WTC11 (cell line): ENCODE measurements at regions of chr11 and their contacts with region 1.

Region 1: GRCh38 chr11:120108154-120108865 is 29.6 kb downstream of the TRIM29 start:
- DNase-seq: peak; percentile 86
- ATAC-seq: peak; percentile 91
- H3K4me3 Mint-ChIP-seq: no peak overlapping the region
- H3K27ac Mint-ChIP-seq: no peak overlapping the region
- H3K4me1 Mint-ChIP-seq: peaks cover 23% of the 10 kb centered on the region
- H3K27me3 Mint-ChIP-seq: no peaks in the 10 kb centered on the region; the same call in 1 of the 2 replicates
- CTCF ChIP-seq: peak; percentile 99

Region 2: DNA sequence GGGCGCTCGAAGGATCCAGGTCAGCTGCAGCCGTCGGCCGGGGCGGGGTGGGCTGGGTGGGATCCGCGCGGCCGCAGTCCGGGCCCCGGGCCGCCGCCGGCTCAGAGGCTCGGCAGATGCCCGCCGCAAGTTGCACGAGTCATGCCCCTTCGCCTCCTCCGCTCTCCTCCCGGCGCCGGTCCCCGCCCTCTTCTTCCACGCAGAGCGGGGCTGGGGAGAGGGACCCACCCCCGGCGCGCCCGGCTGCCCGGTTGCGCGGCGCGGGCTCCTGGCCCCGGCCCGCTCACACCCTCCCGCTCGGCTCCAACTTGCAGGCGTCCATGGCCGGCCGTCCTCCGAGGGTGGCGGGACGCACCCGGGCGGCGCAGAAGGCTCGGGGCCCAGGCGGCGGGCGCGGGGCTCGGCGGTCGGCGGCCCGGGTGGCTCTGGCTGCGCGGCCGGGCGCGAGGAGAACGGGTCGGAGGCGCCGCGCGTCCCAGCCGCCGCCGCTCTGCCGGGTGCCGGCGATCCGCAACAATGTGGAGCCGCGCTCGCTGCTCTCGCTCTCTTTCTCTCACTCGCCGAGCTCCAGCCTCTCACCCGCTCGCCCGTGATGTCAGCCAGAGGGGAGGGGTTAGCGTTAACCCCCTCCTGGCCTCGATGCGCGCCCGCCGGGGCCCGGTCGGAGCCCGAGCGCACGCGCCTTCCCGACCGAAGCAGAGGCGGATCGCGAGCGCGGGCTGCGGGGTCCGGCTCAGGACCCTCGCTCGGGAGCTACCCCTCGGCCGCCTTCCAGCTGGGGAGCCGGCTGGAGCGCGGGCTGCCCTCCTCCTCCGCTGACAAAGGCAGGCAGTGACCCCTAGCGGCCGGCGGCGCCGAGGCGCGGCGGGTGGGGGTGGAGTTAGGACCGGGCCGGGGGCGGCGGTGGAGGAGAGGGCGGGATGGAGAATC is 379.4 kb before region 1 on chr11 and contains the start of gene NECTIN1:
- CTCF ChIA-PET with region 1: interaction called, 11 read pairs
- POLR2A ChIA-PET with region 1: no interaction called
- DNase-seq: peak; percentile 96
- ATAC-seq: peak; percentile 71
- H3K4me3 Mint-ChIP-seq: peak within 1 kb of the TSS; percentile 95
- H3K27ac Mint-ChIP-seq: peak within 1 kb of the TSS; percentile 75
- H3K4me1 Mint-ChIP-seq: peaks cover 35% of the 10 kb centered on the region
- H3K27me3 Mint-ChIP-seq: peaks cover 4% of the 10 kb centered on the region; the same call in 1 of the 2 replicates
- CTCF ChIP-seq: peak; percentile 90
- total RNA-seq, gene NECTIN1: 68.4 to 86.2 TPM (median 69.5 TPM) in 3 replicates

Region 3: DNA sequence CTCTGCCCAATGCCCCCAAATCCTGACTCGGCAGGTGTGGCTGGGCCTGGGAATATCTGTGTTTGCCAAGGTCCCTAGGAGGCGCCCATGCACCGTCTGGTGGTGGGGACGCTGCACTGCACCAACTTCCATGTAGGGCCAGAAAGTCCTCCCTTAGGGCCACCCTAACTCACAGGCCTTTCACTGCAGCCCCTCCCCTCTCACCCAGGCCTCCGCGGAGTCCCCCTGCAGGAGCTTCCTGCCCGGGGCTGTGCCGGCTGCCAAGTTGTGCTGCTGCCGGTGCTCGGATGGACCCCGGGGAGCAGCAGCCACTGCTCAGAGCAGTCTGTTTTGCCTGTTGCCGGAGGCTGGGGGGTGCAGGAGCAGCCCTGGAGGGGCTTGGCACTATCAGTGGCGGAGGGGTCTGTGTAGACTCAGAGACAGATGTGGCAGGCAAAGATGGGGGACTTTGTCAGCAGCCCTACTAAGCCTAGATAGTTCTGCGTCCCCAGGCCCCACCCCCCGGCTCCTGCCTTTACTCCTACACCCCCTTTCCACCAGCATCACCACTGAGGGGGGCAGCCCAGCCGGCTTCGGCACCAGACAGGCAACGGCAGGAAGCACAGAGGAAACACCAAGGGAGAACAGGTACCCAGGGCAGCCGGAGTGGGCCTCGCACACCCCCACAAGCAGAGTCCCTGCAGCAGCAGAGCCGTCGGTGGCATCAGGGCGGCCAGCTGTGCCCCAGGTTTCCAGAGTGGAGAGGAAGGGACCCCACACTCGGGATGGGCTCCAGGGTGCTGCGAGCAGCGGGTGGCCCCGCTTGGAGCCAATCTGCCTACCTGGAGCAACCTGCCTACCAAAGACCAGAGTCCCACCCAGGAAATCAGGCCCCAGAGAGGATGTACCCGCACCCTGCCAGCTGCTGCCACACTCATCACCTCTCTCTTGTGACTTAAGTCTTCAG is 94.7 kb before region 1 on chr11:
- CTCF ChIA-PET with region 1: interaction called, 65 read pairs
- POLR2A ChIA-PET with region 1: no interaction called
- DNase-seq: peak; percentile 87
- ATAC-seq: peak; percentile 98
- H3K4me3 Mint-ChIP-seq: 0 out of 2 replicates have a peak overlapping the region, but pooled peaks have one; percentile 14
- H3K27ac Mint-ChIP-seq: no peak overlapping the region
- H3K4me1 Mint-ChIP-seq: peaks cover 52% of the 10 kb centered on the region
- H3K27me3 Mint-ChIP-seq: peaks cover 22% of the 10 kb centered on the region
- CTCF ChIP-seq: peak; percentile 68

Region 4: GRCh38 chr11:120061761-120062560 is 46.3 kb before region 1 on chr11:
- CTCF ChIA-PET with region 1: interaction called, 18 read pairs
- POLR2A ChIA-PET with region 1: no interaction called
- DNase-seq: peak; percentile 57
- ATAC-seq: peak; percentile 49
- H3K4me3 Mint-ChIP-seq: no peak overlapping the region
- H3K27ac Mint-ChIP-seq: no peak overlapping the region
- H3K4me1 Mint-ChIP-seq: peaks cover 52% of the 10 kb centered on the region
- H3K27me3 Mint-ChIP-seq: peaks cover 6% of the 10 kb centered on the region
- CTCF ChIP-seq: no peak

Region 5: GRCh38 chr11:120089036-120090001 is 19.0 kb before region 1 on chr11:
- CTCF ChIA-PET with region 1: interaction called, 14 read pairs
- POLR2A ChIA-PET with region 1: no interaction called
- DNase-seq: no peak
- ATAC-seq: no peak
- H3K4me3 Mint-ChIP-seq: no peak overlapping the region
- H3K27ac Mint-ChIP-seq: no peak overlapping the region; the same call in 1 of the 2 replicates
- H3K4me1 Mint-ChIP-seq: peaks cover 13% of the 10 kb centered on the region
- H3K27me3 Mint-ChIP-seq: peaks cover 11% of the 10 kb centered on the region
- CTCF ChIP-seq: no peak

Region 6: GRCh38 chr11:120120805-120121335 is 12.6 kb after region 1 on chr11:
- CTCF ChIA-PET with region 1: interaction called, 10 read pairs
- POLR2A ChIA-PET with region 1: no interaction called
- DNase-seq: no peak
- ATAC-seq: no peak
- H3K4me3 Mint-ChIP-seq: no peak overlapping the region
- H3K27ac Mint-ChIP-seq: no peak overlapping the region
- H3K4me1 Mint-ChIP-seq: peaks cover 12% of the 10 kb centered on the region
- H3K27me3 Mint-ChIP-seq: no peaks in the 10 kb centered on the region
- CTCF ChIP-seq: no peak

Region 7: GRCh38 chr11:120197251-120197891 is 89.1 kb after region 1 on chr11:
- CTCF ChIA-PET with region 1: no interaction called
- POLR2A ChIA-PET with region 1: no interaction called
- DNase-seq: no peak
- ATAC-seq: peak; percentile 70
- H3K4me3 Mint-ChIP-seq: no peak overlapping the region; the same call in 1 of the 2 replicates
- H3K27ac Mint-ChIP-seq: no peak overlapping the region
- H3K4me1 Mint-ChIP-seq: peaks cover 47% of the 10 kb centered on the region
- H3K27me3 Mint-ChIP-seq: peaks cover 79% of the 10 kb centered on the region
- CTCF ChIP-seq: no peak

Region 8: DNA sequence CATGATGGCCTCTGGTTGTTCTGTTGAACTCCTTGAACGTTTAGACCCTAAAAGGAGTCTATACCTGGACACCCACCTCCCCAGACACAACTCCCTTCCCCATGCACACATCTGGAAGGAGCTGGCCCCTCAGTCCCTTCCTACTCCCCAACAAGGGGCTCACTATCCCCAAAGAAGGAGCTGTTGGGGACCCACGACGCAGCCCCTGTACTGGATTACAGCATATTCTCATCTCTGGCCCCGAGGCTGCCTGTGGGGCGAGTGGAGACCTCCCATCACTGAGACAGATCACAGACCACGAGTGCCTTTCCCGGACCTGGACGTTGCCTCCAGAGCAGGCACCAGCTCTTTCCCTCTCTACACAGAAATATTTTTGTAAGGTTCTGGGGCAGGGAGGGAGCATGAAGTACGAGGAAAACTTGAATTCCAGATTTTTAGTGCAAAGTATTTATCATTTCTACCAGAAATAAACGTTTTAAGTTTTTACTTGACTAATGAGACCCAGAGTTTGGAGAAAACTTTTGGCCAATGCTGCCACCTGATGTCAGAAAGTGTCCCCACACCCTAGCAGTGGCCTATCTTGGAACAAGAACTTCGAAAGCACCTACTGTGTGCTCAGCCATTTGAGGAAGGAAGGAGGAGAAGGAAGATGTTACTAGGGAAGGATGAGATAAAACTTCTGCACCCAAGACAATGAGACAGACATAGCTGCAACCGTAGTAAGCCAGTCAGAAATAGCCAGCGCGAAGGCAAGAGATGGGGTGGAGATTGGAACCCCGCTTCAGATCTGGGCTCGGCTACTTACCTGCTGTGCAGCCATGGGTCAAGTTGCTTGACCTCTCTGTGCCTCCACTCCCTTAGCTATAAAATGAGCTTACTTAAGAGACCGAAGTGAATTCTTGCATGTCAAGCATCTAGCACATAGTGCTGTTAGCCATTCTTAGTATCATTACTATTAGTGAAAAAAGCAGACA is 121.4 kb after region 1 on chr11:
- CTCF ChIA-PET with region 1: interaction called, 13 read pairs
- POLR2A ChIA-PET with region 1: no interaction called
- DNase-seq: peak; percentile 57
- ATAC-seq: peak; percentile 49
- H3K4me3 Mint-ChIP-seq: no peak overlapping the region
- H3K27ac Mint-ChIP-seq: no peak overlapping the region
- H3K4me1 Mint-ChIP-seq: peaks cover 14% of the 10 kb centered on the region
- H3K27me3 Mint-ChIP-seq: peaks cover 2% of the 10 kb centered on the region; the same call in 1 of the 2 replicates
- CTCF ChIP-seq: peak; percentile 41